ENCODE measurements at regions of chr2 and their contacts with region 1.

Region 1: GRCh38 chr2:150472511-150472899 is 15.0 kb downstream of the RND3 start:
- DNase-seq: no peak
- H3K4me3 ChIP-seq: no peak overlapping the region
- H3K27ac ChIP-seq: no peak overlapping the region
- H3K4me1 ChIP-seq: no peaks in the 10 kb centered on the region
- H3K27me3 ChIP-seq: no peaks in the 10 kb centered on the region
- CTCF ChIP-seq: no peak
- EP300 ChIP-seq: no peak
- POLR2A ChIP-seq: no peak

Region 2: GRCh38 chr2:150425121-150425955 is 47.2 kb before region 1 on chr2:
- intact Hi-C with region 1: loop called in 1 of 4 experiments (anchors 2 kb)
- DNase-seq: no peak
- H3K4me3 ChIP-seq: no peak overlapping the region
- H3K27ac ChIP-seq: no peak overlapping the region
- H3K4me1 ChIP-seq: no peaks in the 10 kb centered on the region
- H3K27me3 ChIP-seq: no peaks in the 10 kb centered on the region
- CTCF ChIP-seq: no peak
- EP300 ChIP-seq: no peak
- POLR2A ChIP-seq: no peak

Region 3: GRCh38 chr2:151097128-151097527 is 624.6 kb after region 1 on chr2:
- intact Hi-C with region 1: no loop called
- DNase-seq: no peak
- H3K4me3 ChIP-seq: no peak overlapping the region
- H3K27ac ChIP-seq: no peak overlapping the region
- H3K4me1 ChIP-seq: no peaks in the 10 kb centered on the region
- H3K27me3 ChIP-seq: no peaks in the 10 kb centered on the region
- CTCF ChIP-seq: no peak
- EP300 ChIP-seq: no peak
- POLR2A ChIP-seq: no peak

Measured in ovary (tissue), 10 donors.